ENCODE measurements at regions of chr7 and their contacts with region 1.

Region 1: DNA sequence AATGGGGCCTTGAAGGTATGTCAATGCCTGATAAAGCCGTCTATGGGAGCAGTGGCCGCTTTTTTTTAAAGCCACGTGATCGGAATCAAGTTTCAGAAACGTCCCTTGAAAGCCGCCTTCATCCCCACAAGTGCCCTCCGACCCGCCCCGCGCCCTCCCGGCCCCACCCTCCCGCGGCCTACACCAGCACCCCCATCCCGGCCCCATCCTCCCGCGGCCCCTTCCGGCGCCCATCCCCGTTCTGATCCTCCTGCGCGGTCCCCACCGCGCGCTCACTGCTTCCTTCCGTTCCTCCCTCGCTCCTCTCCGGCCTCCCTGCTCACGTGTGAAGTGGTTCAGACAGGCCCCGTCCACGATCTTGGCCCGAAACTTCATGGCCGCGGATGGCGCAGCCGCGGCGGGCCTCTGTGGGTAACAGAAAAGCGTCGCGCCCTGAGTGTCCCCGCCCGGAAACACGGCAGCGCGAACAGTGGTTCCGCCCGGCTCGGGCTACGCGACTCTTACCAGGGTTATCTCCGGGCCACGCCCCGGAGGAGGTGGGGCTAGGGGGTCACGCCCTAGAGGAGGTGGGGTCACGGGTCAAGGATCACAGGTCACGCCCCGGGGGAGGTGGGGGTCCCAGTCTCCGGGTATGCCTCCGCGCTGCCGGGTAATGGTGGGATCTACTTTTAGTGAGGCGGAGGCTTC is at the start of gene HUS1:
- DNase-seq: peak; percentile 94
- ATAC-seq: peak; percentile 98
- H3K4me3 Mint-ChIP-seq: peak within 1 kb of the TSS; percentile 85
- H3K27ac Mint-ChIP-seq: peak within 1 kb of the TSS; percentile 97
- H3K4me1 Mint-ChIP-seq: peaks cover 26% of the 10 kb centered on the region
- H3K27me3 Mint-ChIP-seq: no peaks in the 10 kb centered on the region
- CTCF ChIP-seq: no peak
- total RNA-seq, gene HUS1: 37.1 to 43.5 TPM

Region 2: GRCh38 chr7:47968847-47969774 is 10.2 kb before region 1 on chr7:
- CTCF ChIA-PET with region 1: interaction called, 13 read pairs
- POLR2A ChIA-PET with region 1: interaction called, 7 read pairs
- intact Hi-C with region 1: no loop called
- DNase-seq: peak; percentile 75
- ATAC-seq: peak; percentile 83
- H3K4me3 Mint-ChIP-seq: no peak overlapping the region
- H3K27ac Mint-ChIP-seq: peak overlapping the region; percentile 51
- H3K4me1 Mint-ChIP-seq: peaks cover 28% of the 10 kb centered on the region
- H3K27me3 Mint-ChIP-seq: no peaks in the 10 kb centered on the region
- CTCF ChIP-seq: peak; percentile 85

Region 3: DNA sequence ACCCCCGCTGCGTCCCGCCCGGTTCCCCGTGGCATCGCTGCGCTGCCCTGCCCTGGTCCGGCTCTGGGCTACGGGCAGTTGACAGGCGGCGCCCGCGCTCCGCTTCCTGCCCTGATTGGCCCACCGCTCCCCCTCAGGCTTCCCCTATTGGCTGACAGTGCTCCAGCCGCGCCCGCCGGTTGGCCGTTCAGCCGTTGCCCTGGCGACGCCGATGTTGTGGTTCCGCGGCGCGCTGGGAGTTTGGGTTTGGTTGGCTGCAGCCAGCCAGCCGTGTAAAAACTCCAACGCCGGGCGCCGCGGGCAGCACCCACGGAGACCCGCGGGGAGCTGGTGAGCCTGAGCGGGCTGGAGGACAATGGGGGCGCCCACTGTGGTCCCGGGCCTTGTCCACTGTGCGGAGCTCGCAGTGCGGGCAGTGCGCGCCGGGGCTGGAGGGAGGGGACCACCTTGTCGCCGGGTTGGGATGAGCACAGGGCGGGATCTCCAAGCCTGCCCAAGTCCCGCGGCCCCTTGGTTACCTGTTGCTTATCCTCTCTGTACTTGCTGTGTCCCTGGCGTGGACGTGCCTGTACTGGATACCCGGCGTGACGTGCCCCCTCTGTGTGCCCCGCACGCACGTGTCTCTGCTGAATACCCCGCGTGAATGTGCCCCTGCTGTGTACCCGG is 56.1 kb after region 1 on chr7 and contains the start of gene C7orf57:
- CTCF ChIA-PET with region 1: no interaction called
- POLR2A ChIA-PET with region 1: no interaction called
- intact Hi-C with region 1: no loop called
- DNase-seq: peak; percentile 85
- ATAC-seq: peak; percentile 96
- H3K4me3 Mint-ChIP-seq: peak within 1 kb of the TSS; percentile 69
- H3K27ac Mint-ChIP-seq: no peak within 1 kb of the TSS
- H3K4me1 Mint-ChIP-seq: peaks cover 9% of the 10 kb centered on the region
- H3K27me3 Mint-ChIP-seq: peaks cover 26% of the 10 kb centered on the region
- CTCF ChIP-seq: no peak
- total RNA-seq, gene C7orf57: 0.74 to 0.83 TPM